ENCODE measurements at regions of chr2 and their contacts with region 1.

Region 1: GRCh38 chr2:223465793-223466192 is 136.4 kb downstream of the SCG2 start:
- DNase-seq: peak; percentile 82

Region 2: GRCh38 chr2:222976521-222977076 is 489.2 kb before region 1 on chr2:
- intact Hi-C with region 1: loop called (anchors 10 kb)
- DNase-seq: no peak

Region 3: GRCh38 chr2:223041527-223042109 is 424.2 kb before region 1 on chr2:
- intact Hi-C with region 1: loop called (anchors 10 kb)
- DNase-seq: no peak

Region 4: GRCh38 chr2:223613017-223613950 is 147.5 kb after region 1 on chr2:
- intact Hi-C with region 1: loop called (anchors 5 kb)
- DNase-seq: peak; percentile 89

Measured in cardiac septum (tissue), 1 donor.